ENCODE measurements at regions of chr10 and their contacts with region 1.

Region 1: GRCh38 chr10:13087986-13088618 is 11.9 kb upstream of the OPTN start:
- DNase-seq: peak; percentile 51
- H3K4me3 ChIP-seq: no peak overlapping the region
- CTCF ChIP-seq: no peak

Region 2: GRCh38 chr10:13099666-13100348 is 11.7 kb after region 1 on chr10 and contains the start of gene OPTN:
- CTCF ChIA-PET with region 1: interaction called, 38 read pairs
- POLR2A ChIA-PET with region 1: no interaction called
- DNase-seq: peak; percentile 31
- H3K4me3 ChIP-seq: peak within 1 kb of the TSS; percentile 79
- CTCF ChIP-seq: peak; percentile 78

Region 3: DNA sequence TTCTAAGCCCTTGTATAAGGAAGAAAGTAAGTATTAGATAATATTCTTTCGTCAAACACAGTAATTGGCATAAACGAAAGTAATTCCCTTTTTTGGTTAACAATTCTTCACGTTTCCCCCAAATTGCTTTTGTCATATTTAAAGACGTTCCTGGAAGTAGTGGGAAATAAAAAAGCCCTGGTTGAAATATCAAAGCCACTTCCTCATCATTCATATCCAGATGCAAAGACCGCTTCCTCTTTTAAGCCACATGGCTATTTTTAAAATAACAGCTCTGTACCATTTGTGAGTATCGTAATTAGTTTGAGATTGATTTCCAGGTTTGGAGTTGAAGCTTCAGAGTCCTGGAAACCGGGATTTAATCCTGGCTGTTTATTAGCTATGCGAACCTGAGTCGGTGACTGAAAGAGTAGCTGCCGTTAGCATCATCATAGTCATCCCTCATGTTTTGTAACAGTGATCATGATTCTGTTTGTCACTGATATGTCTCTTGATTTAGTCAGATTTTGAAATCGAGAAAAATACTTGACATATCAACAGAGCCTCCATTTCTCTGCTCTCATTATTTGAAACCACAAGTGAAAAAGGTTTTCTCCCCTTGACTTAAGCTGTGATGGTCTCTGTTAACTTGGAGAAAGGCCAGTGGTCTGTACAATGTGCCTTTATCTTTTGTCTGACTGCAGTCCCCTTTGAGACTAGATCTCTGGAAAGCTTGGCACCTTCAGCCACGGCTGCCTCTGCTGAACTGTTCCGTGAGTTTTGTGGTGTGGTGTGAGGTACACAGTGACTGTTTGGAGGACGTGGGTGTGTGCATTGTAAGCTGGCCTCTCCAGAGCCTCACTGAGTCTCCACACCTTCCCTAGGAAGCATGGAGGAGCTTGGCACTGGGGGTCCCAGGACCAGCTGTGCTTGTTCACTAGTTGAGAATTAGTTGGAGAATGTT is 30.0 kb after region 1 on chr10:
- CTCF ChIA-PET with region 1: no interaction called
- POLR2A ChIA-PET with region 1: no interaction called
- DNase-seq: no peak
- H3K4me3 ChIP-seq: no peak overlapping the region
- CTCF ChIP-seq: no peak

Region 4: GRCh38 chr10:13206546-13207443 is 118.7 kb after region 1 on chr10:
- CTCF ChIA-PET with region 1: no interaction called
- POLR2A ChIA-PET with region 1: no interaction called
- DNase-seq: no peak
- H3K4me3 ChIP-seq: no peak overlapping the region
- CTCF ChIP-seq: peak; percentile 53

Measured in AG04449 (cell line).